HAP-1 (cell line): ENCODE measurements at regions of chr9 and their contacts with region 1.

Region 1: DNA sequence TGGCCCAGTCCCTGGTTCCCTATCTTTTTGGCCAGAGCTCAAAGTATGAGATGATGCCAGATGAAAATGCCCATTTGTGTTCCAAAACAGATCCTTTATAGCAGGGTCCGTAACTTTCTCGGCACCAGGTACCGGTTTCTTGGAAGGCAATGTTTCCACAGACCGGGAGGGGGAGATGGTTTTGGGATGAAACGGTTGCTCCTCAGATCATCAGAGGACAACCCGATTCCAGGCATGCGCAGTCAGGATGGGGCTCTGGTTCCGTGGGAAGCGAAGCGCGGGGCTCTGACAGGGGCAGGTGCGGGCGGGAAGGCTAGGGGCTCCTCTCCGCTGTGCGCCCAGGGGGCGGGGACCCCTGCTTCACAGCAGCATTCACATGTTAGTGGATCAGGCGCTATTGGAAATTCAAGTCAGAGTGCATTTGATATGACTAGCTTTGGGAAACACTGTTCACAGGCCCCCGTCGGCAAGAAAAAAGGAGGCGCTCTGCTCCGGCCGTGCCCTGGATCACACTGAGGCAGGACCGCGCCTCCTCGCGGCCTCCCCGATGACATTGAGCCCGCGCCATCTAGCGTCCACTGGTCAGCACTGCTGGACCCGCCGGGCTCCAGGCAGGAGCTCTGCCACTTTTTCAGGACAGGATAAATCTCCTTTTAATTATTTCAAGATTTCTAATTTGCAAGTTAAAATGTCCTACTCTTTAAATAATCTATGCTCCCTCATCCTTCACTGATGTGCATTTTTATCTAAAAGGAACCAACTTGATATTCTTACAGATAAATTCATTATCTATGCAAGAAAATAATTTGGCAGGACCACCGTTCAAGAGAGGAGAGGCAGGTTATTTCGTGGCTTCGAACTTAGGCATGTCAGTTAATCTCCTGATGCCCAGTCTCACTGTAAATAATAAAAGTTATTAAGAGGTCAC is 190.0 kb downstream of the FANCC start:
- DNase-seq: peak; percentile 60 to 87
- H3K4me3 ChIP-seq: no peak overlapping the region
- H3K4me1 ChIP-seq: no peaks in the 10 kb centered on the region
- H3K27me3 ChIP-seq: no peaks in the 10 kb centered on the region

Region 2: GRCh38 chr9:94681508-94681907 is 446.0 kb before region 1 on chr9:
- in situ Hi-C with region 1: loop called (anchors 5 kb)
- DNase-seq: peak; percentile 58 to 82
- H3K4me3 ChIP-seq: no peak overlapping the region
- H3K4me1 ChIP-seq: peaks cover 4% of the 10 kb centered on the region; the same call in 1 of the 2 replicates
- H3K27me3 ChIP-seq: no peaks in the 10 kb centered on the region

Region 3: DNA sequence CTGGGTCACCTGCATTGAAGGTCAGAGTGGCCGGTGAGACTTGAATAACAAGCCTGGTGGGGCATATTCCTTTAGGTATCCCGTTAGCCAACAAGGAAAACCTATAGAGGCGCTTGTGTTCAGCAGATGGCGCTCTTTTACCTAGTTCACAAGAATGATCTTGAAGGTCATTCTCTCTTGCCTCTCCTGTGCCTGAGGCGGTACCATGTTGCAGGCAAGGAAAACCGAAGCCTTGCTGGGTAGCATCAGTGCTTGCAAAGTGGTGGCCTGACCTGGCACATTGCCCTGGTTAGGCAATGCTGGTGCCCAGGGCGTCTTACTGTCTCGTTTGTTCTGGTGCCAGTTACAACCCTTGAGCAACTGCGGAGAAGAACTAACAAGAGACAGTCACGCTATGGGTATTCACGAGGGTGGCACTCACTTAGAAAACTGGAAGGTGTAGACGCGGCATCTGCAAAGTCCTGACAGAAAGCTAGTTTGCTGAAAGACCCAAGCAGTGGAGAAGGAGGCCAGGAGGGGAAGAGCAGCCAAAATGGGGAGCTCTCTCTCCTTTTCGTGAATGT is 344.3 kb before region 1 on chr9:
- in situ Hi-C with region 1: loop called (anchors 5 kb)
- DNase-seq: peak; percentile 82 to 85
- H3K4me3 ChIP-seq: no peak overlapping the region
- H3K4me1 ChIP-seq: peaks cover 2% of the 10 kb centered on the region; the same call in 1 of the 2 replicates
- H3K27me3 ChIP-seq: no peaks in the 10 kb centered on the region

Region 4: GRCh38 chr9:95197692-95198271 is 70.3 kb after region 1 on chr9:
- in situ Hi-C with region 1: no loop called
- DNase-seq: no peak
- H3K4me3 ChIP-seq: no peak overlapping the region
- H3K4me1 ChIP-seq: peaks cover 6% of the 10 kb centered on the region; the same call in 1 of the 2 replicates
- H3K27me3 ChIP-seq: no peaks in the 10 kb centered on the region

Region 5: GRCh38 chr9:96193236-96193755 is 1065.8 kb after region 1 on chr9:
- in situ Hi-C with region 1: no loop called
- DNase-seq: no peak
- H3K4me3 ChIP-seq: no peak overlapping the region
- H3K4me1 ChIP-seq: no peaks in the 10 kb centered on the region
- H3K27me3 ChIP-seq: no peaks in the 10 kb centered on the region; the same call in 1 of the 2 replicates